H1 (cell line): ENCODE measurements at regions of chr1 and their contacts with region 1.

Region 1: DNA sequence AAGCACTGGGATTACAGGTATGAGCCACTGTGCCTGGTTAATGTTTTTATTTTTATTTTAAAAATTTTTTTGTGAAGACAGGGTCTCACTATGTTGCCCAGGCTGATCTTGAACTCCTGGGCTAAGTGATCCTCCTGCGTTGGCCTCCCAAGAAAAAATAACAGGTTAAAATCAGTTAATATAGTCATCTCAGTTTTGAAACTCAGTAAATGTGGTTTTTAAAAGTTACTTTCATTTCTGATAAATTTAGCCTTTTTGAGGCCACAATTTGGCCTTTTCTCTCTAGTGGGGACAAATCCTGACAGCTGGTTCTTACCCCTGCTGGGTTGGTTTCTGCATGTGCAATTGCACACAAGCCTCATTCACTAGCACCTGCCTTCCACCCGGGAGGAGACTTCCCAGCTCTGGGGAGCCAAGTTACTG is 13.3 kb downstream of the PMF1 start:
- DNase-seq: no peak
- H3K4me3 ChIP-seq: no peak overlapping the region
- H3K27ac ChIP-seq: no peak overlapping the region
- H3K4me1 ChIP-seq: no peaks in the 10 kb centered on the region
- H3K27me3 ChIP-seq: no peaks in the 10 kb centered on the region
- CTCF ChIP-seq: no peak
- EP300 ChIP-seq: no peak
- POLR2A ChIP-seq: no peak
- RAD21 ChIP-seq: no peak

Region 2: DNA sequence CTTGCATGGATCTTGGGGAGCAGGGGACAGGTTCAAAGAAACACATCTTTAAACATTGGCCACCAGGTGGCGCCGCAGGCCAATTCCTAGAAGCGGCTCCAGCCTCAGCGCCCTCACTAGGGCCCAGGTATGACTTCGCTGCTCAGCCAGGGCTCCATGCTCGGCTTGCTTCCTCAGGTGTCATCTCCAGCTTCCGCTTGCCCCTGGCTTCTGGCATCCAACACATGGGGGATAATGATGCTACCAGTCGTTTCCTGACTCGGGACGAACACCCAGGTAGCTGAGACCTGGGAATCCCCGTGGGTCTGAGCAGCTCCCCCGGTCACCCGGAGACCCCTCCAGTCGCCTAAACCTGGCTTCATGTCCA is 135.3 kb before region 1 on chr1:
- CTCF ChIA-PET with region 1: interaction called, 15 read pairs
- POLR2A ChIA-PET with region 1: no interaction called
- DNase-seq: peak in 1 of 2 experiments; percentile 95
- H3K4me3 ChIP-seq: no peak overlapping the region
- H3K27ac ChIP-seq: no peak overlapping the region
- H3K4me1 ChIP-seq: peaks cover 2 to 7% (median 5%) of the 10 kb centered on the region in 4 experiments
- H3K27me3 ChIP-seq: no peaks in the 10 kb centered on the region
- CTCF ChIP-seq: peak; percentile 66 to 97 (median 90)
- EP300 ChIP-seq: no peak
- POLR2A ChIP-seq: no peak
- RAD21 ChIP-seq: peak; percentile 90 to 93

Region 3: GRCh38 chr1:156136970-156137483 is 89.1 kb before region 1 on chr1:
- CTCF ChIA-PET with region 1: interaction called, 1,265 read pairs
- POLR2A ChIA-PET with region 1: interaction called, 23 read pairs
- DNase-seq: peak in 1 of 2 experiments; percentile 67
- H3K4me3 ChIP-seq: no peak overlapping the region
- H3K27ac ChIP-seq: no peak overlapping the region
- H3K4me1 ChIP-seq: peaks cover 0 to 6% (median 4%) of the 10 kb centered on the region in 4 experiments; a peak in 4 of 7 replicates
- H3K27me3 ChIP-seq: no peaks in the 10 kb centered on the region
- CTCF ChIP-seq: peak; percentile 59 to 71 (median 65)
- EP300 ChIP-seq: no peak
- POLR2A ChIP-seq: no peak
- RAD21 ChIP-seq: peak; percentile 32 to 51; a peak in 3 of 4 replicates

Region 4: DNA sequence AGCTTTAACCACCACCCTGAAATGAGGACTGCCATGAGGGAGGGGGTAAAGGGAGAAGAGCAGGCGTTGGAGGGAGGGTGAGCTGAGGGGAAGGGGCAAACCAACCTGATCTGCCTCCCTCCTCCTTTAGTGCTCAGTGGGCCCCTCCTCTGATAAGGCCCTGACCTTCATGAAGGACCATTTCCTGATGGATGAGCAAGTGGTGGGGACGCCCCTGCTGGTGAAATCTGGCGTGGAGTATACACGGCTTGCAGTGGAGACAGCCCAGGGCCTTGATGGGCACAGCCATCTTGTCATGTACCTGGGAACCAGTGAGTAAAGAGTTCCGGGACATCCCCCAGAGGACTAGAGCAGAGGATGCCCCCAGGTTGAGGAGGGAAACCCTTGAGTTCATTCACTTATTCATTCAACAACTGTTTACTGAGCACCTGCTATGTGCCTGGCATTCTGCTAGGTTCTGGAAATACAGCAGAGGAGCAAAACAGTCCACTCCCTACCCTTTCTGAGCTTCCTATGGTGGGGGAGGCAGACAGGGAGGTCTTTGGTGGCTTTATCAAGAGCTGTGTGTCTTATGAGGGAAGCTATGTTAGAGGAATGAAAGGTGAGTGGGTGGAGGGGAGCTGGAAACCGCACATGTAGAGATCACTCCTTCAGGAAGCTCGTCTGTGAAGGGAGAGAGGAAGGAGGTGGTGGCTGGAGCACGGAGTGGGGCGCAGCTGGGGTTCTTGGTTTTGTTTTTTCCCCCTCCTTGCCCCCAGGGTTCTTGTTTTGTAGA is 53.2 kb before region 1 on chr1:
- CTCF ChIA-PET with region 1: interaction called, 50 read pairs
- POLR2A ChIA-PET with region 1: interaction called, 4 read pairs
- DNase-seq: no peak
- H3K4me3 ChIP-seq: no peak overlapping the region
- H3K27ac ChIP-seq: peak overlapping the region; percentile 25; the same call in 1 of the 2 replicates
- H3K4me1 ChIP-seq: peaks cover 2 to 11% (median 7%) of the 10 kb centered on the region in 4 experiments
- H3K27me3 ChIP-seq: peaks cover 0 to 2% (median 0%) of the 10 kb centered on the region in 4 experiments; a peak in 1 of 7 replicates
- CTCF ChIP-seq: peak; percentile 16 to 65 (median 59); a peak in 3 of 4 replicates
- EP300 ChIP-seq: no peak
- POLR2A ChIP-seq: no peak
- RAD21 ChIP-seq: peak in 1 of 2 experiments; percentile 13; a peak in 2 of 4 replicates

Region 5: DNA sequence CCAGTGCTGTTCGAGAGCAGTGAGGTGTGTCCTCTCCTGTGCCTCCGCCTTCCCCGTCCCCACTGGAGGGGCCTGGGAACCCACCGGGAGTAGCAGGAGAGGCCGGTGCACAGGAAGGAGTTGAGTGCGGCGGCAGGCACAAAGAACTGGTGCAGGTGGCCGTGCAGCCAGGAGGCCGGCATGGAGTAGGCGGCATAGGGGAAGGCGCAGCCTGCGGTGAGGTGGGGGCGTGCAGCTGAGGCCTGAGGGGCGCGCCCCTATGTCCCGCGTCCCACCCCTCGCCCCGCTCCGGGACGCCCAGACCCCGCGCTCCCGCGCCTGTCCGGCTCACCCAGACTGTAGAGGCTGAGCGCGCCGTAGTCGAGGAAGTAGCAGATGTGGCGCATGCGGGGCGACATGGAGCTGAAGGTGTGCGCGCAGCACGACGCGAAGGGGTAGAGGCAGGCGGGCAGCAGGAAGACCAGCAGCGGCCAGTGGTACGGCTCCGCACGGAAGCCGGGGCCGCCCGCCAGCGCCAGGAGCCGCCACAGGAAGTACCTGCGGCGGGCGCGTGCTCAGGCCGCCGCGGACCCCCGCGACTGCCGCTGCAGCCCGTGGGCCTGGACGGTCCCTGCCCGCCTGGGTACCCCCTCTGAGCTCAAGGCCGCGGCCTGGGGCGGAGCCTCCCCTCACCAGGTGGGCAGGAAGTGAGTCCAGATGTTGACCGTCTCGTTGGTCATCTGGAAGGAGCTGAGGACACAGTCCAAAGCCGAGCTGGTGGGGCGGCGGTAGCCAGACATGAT is 19.5 kb after region 1 on chr1:
- CTCF ChIA-PET with region 1: interaction called, 14 read pairs
- POLR2A ChIA-PET with region 1: interaction called, 82 read pairs
- DNase-seq: peak in 1 of 2 experiments; percentile 54
- H3K4me3 ChIP-seq: peak overlapping the region in 3 of 4 experiments; percentile 7 to 40 (median 10); a peak in 5 of 8 replicates
- H3K27ac ChIP-seq: no peak overlapping the region
- H3K4me1 ChIP-seq: peaks cover 0 to 16% (median 9%) of the 10 kb centered on the region in 4 experiments
- H3K27me3 ChIP-seq: no peaks in the 10 kb centered on the region
- CTCF ChIP-seq: no peak
- EP300 ChIP-seq: no peak
- POLR2A ChIP-seq: no peak
- RAD21 ChIP-seq: no peak